ENCODE measurements at regions of chr18 and their contacts with region 1.

Region 1: GRCh38 chr18:64100116-64100922 is 48.6 kb downstream of the LINC00305 start:
- DNase-seq: peak; percentile 33
- ATAC-seq: peak; percentile 74
- H3K4me3 ChIP-seq: no peak overlapping the region
- H3K27ac ChIP-seq: no peak overlapping the region
- H3K4me1 ChIP-seq: no peaks in the 10 kb centered on the region; the same call in 1 of the 2 replicates
- H3K27me3 ChIP-seq: no peaks in the 10 kb centered on the region
- CTCF ChIP-seq: no peak
- EP300 ChIP-seq: 0 out of 4 replicates have a peak, but pooled peaks of 1 of the 2 experiments have one; percentile 8
- POLR2A ChIP-seq: no peak
- RAD21 ChIP-seq: no peak

Region 2: GRCh38 chr18:64017870-64018269 is 82.4 kb before region 1 on chr18:
- CTCF ChIA-PET with region 1: interaction called, 4 read pairs
- POLR2A ChIA-PET with region 1: no interaction called
- RAD21 ChIA-PET with region 1: interaction called, 3 read pairs
- SMC1A ChIA-PET with region 1: interaction called, 5 read pairs
- in situ Hi-C with region 1: no loop called
- intact Hi-C with region 1: loop called (anchors 5 kb)
- DNase-seq: no peak
- ATAC-seq: peak; percentile 68
- H3K4me3 ChIP-seq: no peak overlapping the region
- H3K27ac ChIP-seq: no peak overlapping the region
- H3K4me1 ChIP-seq: no peaks in the 10 kb centered on the region
- H3K27me3 ChIP-seq: no peaks in the 10 kb centered on the region; a peak in 1 of 4 replicates
- CTCF ChIP-seq: peak; percentile 32 to 60 (median 45); a peak in 5 of 6 replicates
- EP300 ChIP-seq: no peak
- POLR2A ChIP-seq: no peak
- RAD21 ChIP-seq: peak; percentile 78

Region 3: GRCh38 chr18:64037812-64038414 is 62.4 kb before region 1 on chr18:
- CTCF ChIA-PET with region 1: interaction called, 27 read pairs
- POLR2A ChIA-PET with region 1: no interaction called
- RAD21 ChIA-PET with region 1: interaction called, 5 read pairs
- SMC1A ChIA-PET with region 1: interaction called, 24 read pairs
- in situ Hi-C with region 1: no loop called
- intact Hi-C with region 1: loop called (anchors 2 kb)
- DNase-seq: no peak
- ATAC-seq: peak; percentile 91
- H3K4me3 ChIP-seq: no peak overlapping the region
- H3K27ac ChIP-seq: no peak overlapping the region
- H3K4me1 ChIP-seq: no peaks in the 10 kb centered on the region
- H3K27me3 ChIP-seq: no peaks in the 10 kb centered on the region
- CTCF ChIP-seq: peak; percentile 38 to 63 (median 57); a peak in 5 of 6 replicates
- EP300 ChIP-seq: no peak
- POLR2A ChIP-seq: no peak
- RAD21 ChIP-seq: peak; percentile 71

Region 4: GRCh38 chr18:64110692-64111480 is 10.6 kb after region 1 on chr18:
- CTCF ChIA-PET with region 1: interaction called, 16 read pairs
- POLR2A ChIA-PET with region 1: interaction called, 5 read pairs
- RAD21 ChIA-PET with region 1: interaction called, 4 read pairs
- SMC1A ChIA-PET with region 1: interaction called, 14 read pairs
- in situ Hi-C with region 1: no loop called
- intact Hi-C with region 1: no loop called
- DNase-seq: no peak
- ATAC-seq: no peak
- H3K4me3 ChIP-seq: no peak overlapping the region
- H3K27ac ChIP-seq: no peak overlapping the region
- H3K4me1 ChIP-seq: no peaks in the 10 kb centered on the region
- H3K27me3 ChIP-seq: no peaks in the 10 kb centered on the region; a peak in 2 of 4 replicates
- CTCF ChIP-seq: no peak
- EP300 ChIP-seq: no peak
- POLR2A ChIP-seq: no peak
- RAD21 ChIP-seq: no peak

Region 5: GRCh38 chr18:64119916-64120315 is 19.6 kb after region 1 on chr18:
- CTCF ChIA-PET with region 1: interaction called, 9 read pairs
- POLR2A ChIA-PET with region 1: no interaction called
- RAD21 ChIA-PET with region 1: interaction called, 6 read pairs
- SMC1A ChIA-PET with region 1: interaction called, 15 read pairs
- in situ Hi-C with region 1: no loop called
- intact Hi-C with region 1: no loop called
- DNase-seq: no peak
- ATAC-seq: peak; percentile 35; the same call in 2 of the 3 replicates
- H3K4me3 ChIP-seq: no peak overlapping the region
- H3K27ac ChIP-seq: no peak overlapping the region
- H3K4me1 ChIP-seq: no peaks in the 10 kb centered on the region
- H3K27me3 ChIP-seq: no peaks in the 10 kb centered on the region
- CTCF ChIP-seq: no peak; a peak in 2 of 6 replicates
- EP300 ChIP-seq: no peak
- POLR2A ChIP-seq: no peak
- RAD21 ChIP-seq: peak; percentile 21; the same call in 1 of the 2 replicates

Region 6: DNA sequence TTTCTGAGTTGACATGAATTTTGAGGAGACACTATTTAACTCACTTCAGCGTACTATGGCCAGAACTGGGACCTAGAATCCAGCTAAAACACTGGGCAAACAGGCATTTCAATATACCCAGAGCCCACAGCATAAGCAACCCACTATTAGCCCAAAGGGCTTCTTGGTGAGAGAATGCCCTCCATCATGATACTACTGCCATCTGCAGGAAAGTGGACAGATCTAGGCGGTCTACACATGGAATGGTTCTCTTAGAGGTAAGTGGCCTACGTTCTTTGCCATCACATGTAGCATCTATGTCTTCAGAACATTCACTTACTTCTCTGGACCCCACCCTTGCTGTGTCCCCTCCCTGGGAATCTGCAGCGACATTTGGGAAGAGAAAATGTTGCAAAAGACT is 229.8 kb after region 1 on chr18:
- CTCF ChIA-PET with region 1: interaction called, 25 read pairs
- POLR2A ChIA-PET with region 1: no interaction called
- RAD21 ChIA-PET with region 1: interaction called, 4 read pairs
- SMC1A ChIA-PET with region 1: interaction called, 8 read pairs
- in situ Hi-C with region 1: no loop called
- intact Hi-C with region 1: loop called (anchors 1 kb)
- DNase-seq: no peak
- ATAC-seq: peak; percentile 90
- H3K4me3 ChIP-seq: no peak overlapping the region
- H3K27ac ChIP-seq: no peak overlapping the region
- H3K4me1 ChIP-seq: no peaks in the 10 kb centered on the region
- H3K27me3 ChIP-seq: no peaks in the 10 kb centered on the region
- CTCF ChIP-seq: peak in 2 of 3 experiments; percentile 19 to 38; a peak in 3 of 6 replicates
- EP300 ChIP-seq: no peak
- POLR2A ChIP-seq: no peak
- RAD21 ChIP-seq: peak; percentile 60

Region 7: GRCh38 chr18:64398320-64398719 is 298.0 kb after region 1 on chr18:
- CTCF ChIA-PET with region 1: no interaction called
- POLR2A ChIA-PET with region 1: no interaction called
- RAD21 ChIA-PET with region 1: no interaction called
- SMC1A ChIA-PET with region 1: no interaction called
- in situ Hi-C with region 1: no loop called
- intact Hi-C with region 1: no loop called
- DNase-seq: no peak
- ATAC-seq: peak; percentile 35
- H3K4me3 ChIP-seq: no peak overlapping the region
- H3K27ac ChIP-seq: no peak overlapping the region
- H3K4me1 ChIP-seq: no peaks in the 10 kb centered on the region
- H3K27me3 ChIP-seq: no peaks in the 10 kb centered on the region
- CTCF ChIP-seq: no peak
- EP300 ChIP-seq: no peak
- POLR2A ChIP-seq: no peak
- RAD21 ChIP-seq: no peak

Measured in GM12878 (cell line).